ENCODE measurements at regions of chr1 and their contacts with region 1.

Region 1: DNA sequence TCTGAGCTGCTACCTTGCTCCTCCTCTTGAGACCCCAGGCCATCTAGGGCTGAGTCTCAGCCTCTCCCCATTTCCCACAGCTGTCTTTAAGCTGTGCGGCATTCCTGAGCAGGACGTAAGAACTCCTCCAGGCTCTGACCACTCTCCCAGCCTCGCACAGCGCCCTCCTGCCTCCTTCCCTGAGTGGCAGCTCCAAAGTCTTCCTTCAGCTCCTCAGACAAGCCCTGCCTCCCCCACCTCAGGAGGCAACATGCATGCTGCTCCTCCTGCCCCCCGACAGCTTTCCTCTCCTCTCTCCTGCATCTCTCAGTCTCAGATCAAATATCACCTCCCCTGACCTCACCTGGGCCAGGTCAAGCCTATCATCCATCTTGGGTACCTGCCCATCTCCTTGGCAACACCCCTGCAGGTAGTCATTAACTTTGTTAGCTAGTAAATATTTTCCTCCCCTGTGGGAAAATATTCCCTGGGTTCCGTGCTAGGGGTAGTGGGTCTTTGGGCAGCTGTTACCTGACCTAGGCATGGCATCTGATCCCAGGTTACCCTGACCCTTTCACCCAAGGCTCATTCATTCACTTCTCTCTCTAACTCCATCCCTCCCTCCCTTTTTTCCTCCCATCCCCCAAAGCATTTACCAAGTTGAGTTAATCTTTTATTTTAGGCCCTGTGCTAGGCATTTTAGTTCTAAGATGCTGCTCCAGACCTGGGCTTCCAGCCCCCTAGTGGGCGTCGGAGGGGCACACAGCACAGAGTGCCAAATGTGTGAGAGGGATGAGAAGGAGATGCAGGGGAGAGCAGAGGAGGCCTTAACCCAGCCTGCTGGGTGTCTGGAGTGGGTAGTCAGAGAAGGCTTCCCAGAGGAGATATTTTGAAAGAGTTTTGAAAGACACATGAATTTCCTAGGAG is 419.9 kb downstream of the PTPRU start:
- DNase-seq: peak; percentile 48
- H3K4me3 Mint-ChIP-seq: no peak overlapping the region
- H3K27ac Mint-ChIP-seq: no peak overlapping the region
- H3K4me1 Mint-ChIP-seq: peaks cover 9% of the 10 kb centered on the region
- H3K27me3 Mint-ChIP-seq: peaks cover 19% of the 10 kb centered on the region
- CTCF ChIP-seq: peak; percentile 47

Region 2: DNA sequence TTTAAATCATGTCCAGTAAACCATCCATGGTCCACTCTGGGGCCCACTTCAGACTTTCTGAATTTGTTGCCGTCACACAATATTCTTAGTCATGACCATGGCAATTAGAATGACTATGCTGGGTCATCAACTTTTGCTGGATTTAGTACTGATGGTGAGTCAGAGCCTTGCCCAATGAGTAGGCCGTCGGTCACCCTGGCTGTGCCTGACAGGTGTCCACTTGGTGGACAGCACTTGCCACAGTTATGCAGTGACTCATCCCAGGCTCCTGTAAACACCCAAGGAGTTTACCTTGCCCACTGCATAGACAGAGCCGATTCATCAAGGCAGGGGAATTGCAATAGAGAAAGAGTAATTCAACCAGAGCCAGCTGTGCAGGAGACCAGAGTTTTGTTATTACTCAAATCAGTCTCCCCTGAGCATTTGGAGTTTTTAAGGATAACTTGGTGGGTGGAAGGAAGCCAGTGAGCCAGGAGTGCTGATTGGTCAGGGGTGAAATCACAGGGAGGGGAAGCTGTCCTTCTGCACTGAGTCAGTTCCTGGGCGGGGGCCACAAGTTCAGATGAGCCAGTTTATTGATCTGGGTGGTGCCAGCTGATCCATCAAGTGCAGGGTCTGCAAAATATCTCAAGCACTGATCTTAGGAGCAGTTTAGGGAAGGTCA is 86.1 kb before region 1 on chr1:
- CTCF ChIA-PET with region 1: no interaction called
- intact Hi-C with region 1: loop called (anchors 5 kb)
- DNase-seq: peak; percentile 88
- H3K4me3 Mint-ChIP-seq: peak overlapping the region; percentile 50
- H3K27ac Mint-ChIP-seq: peak overlapping the region; percentile 61
- H3K4me1 Mint-ChIP-seq: peaks cover 20% of the 10 kb centered on the region
- H3K27me3 Mint-ChIP-seq: no peaks in the 10 kb centered on the region
- CTCF ChIP-seq: no peak